Gastrocnemius medialis (tissue), 4 donors: ENCODE measurements at regions of chr20 and their contacts with region 1.

Region 1: GRCh38 chr20:13638496-13639222 is at the start of gene TASP1:
- DNase-seq: peak; percentile 92 to 93
- ATAC-seq: peak; percentile 100
- H3K4me3 ChIP-seq: peak within 1 kb of the TSS; percentile 91 to 99 (median 94)
- H3K27ac ChIP-seq: peak within 1 kb of the TSS; percentile 69 to 75 (median 71)
- H3K4me1 ChIP-seq: peaks cover 5 to 15% of the 10 kb centered on the region in 2 donors
- H3K27me3 ChIP-seq: no peaks in the 10 kb centered on the region
- CTCF ChIP-seq: no peak
- POLR2A ChIP-seq: peak in 1 of 2 donors; percentile 50
- total RNA-seq, gene TASP1: 1.7 to 4.2 (median 2.7) TPM

Region 2: DNA sequence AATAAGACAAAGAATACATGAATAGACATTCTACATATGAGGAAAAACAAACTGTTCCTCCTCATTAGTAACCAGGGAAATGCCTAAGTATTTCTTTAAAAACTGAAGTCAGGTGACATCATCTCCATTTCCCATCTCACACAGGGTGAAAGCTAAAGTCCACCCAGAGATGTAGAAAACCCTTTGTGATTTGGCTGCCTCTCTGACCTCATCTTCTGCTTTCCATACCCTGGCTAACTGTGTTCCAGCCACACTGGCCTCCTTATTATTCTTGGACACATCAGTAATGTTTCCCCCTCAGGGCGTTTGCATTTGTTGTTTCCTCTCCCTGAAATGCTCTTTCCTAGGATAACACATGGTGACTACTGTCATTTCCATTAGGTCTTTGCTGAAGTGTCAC is 105.7 kb after region 1 on chr20:
- in situ Hi-C with region 1: no loop called
- intact Hi-C with region 1: loop called (anchors 10 kb)
- DNase-seq: no peak
- ATAC-seq: no peak
- H3K4me3 ChIP-seq: no peak overlapping the region
- H3K27ac ChIP-seq: no peak overlapping the region
- H3K4me1 ChIP-seq: peaks cover under 1 to 14% of the 10 kb centered on the region in 2 donors
- H3K27me3 ChIP-seq: no peaks in the 10 kb centered on the region
- CTCF ChIP-seq: no peak
- POLR2A ChIP-seq: no peak

Region 3: DNA sequence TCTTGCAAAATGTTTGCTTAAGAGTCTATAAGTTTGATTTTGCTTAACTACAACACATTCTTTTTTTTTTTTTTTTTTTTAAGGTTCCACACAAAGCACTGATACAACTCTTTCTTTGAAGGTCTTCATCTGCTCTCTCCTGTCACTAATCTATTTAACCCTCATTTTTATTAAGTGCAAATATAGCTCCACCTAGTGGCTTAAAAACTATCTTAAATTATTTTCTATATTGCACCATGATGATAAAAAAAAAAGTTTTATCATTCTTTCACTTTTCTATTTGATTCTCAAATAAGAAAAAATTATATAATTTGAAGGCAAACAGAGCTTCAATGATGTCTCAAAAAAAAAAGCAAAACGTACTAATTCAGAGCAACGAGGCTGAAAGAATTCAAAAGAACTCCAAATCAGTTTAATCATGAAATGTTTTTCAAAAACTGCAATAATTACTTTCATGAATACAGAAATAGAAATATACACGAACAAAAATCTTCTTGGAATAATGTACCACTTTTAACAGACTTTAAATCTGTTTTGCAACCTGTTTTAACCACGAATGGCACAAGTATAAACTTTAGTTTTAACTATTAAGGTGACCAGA is 133.3 kb after region 1 on chr20:
- in situ Hi-C with region 1: no loop called
- intact Hi-C with region 1: no loop called
- DNase-seq: no peak
- ATAC-seq: no peak
- H3K4me3 ChIP-seq: no peak overlapping the region
- H3K27ac ChIP-seq: no peak overlapping the region
- H3K4me1 ChIP-seq: peaks cover 0 to 1% of the 10 kb centered on the region in 2 donors
- H3K27me3 ChIP-seq: no peaks in the 10 kb centered on the region
- CTCF ChIP-seq: peak in 4 of 5 experiments; percentile 13 to 56 (median 31)
- POLR2A ChIP-seq: no peak